Activated naive CD4-positive, alpha-beta T cell treated with anti-CD3 and anti-CD28 coated beads for 36 hours (primary cell): ENCODE measurements at regions of chr15 and their contacts with region 1.

Region 1: DNA sequence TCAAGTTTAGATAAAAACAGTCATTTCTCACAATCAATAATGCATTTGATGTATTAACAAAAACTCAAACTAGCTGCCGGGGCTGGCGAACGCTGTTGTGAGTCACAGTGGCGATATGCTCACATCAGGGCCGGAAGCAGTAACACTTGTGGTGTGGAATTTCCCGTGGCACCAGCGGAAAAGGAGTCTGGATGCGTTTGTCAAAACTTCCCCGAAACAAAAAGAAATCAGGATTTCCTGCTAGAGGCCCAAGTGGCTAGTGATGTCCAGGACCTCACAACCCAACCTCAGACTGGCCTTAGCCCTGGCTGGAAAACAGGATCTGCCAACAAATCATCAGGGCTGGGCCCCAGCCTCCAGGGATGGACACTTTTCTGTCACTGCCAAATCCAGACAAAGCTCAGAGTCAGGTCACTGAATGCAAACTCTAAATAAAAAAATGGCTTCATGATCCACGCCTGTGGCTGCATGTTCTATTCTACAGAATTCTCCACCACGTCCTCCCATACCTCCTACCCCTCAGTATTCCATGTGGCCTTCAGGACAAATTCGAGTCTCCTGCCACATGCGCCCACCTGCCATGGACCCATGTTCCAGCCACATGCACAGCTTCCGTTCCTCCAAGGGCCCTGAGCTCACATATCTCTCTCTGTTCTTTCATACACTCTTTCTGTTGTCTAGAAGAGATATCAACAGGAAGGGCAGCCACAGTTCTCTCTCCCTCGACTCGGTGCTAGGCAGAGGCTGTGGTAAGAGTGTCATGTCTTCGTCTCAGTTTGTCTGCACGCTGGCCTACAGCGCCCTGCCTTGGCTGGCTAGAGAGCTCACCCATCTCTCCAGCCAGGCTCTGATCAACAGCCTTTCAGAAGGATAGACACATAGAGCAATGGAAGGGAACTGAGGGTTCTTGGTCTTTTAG is 35.4 kb downstream of the EHD4 start:
- DNase-seq: peak; percentile 95
- H3K4me3 Mint-ChIP-seq: peak overlapping the region; percentile 68
- H3K27ac Mint-ChIP-seq: peak overlapping the region; percentile 100
- H3K4me1 Mint-ChIP-seq: peaks cover 71% of the 10 kb centered on the region
- H3K27me3 Mint-ChIP-seq: no peaks in the 10 kb centered on the region

Region 2: GRCh38 chr15:41695750-41696426 is 241.0 kb before region 1 on chr15:
- CTCF ChIA-PET with region 1: no interaction called
- intact Hi-C with region 1: loop called (anchors 1 kb)
- DNase-seq: peak; percentile 78
- H3K4me3 Mint-ChIP-seq: peak overlapping the region; percentile 22
- H3K27ac Mint-ChIP-seq: peak overlapping the region; percentile 76
- H3K4me1 Mint-ChIP-seq: peaks cover 48% of the 10 kb centered on the region
- H3K27me3 Mint-ChIP-seq: no peaks in the 10 kb centered on the region

Region 3: GRCh38 chr15:41827880-41828806 is 108.8 kb before region 1 on chr15 and contains the start of gene JMJD7:
- CTCF ChIA-PET with region 1: interaction called, 7 read pairs
- intact Hi-C with region 1: loop called (anchors 1 kb)
- DNase-seq: peak; percentile 97
- H3K4me3 Mint-ChIP-seq: peak within 1 kb of the TSS; percentile 82
- H3K27ac Mint-ChIP-seq: peak within 1 kb of the TSS; percentile 59
- H3K4me1 Mint-ChIP-seq: peaks cover 42% of the 10 kb centered on the region
- H3K27me3 Mint-ChIP-seq: no peaks in the 10 kb centered on the region
- total RNA-seq, gene JMJD7: 18.7 to 19.8 TPM

Region 4: DNA sequence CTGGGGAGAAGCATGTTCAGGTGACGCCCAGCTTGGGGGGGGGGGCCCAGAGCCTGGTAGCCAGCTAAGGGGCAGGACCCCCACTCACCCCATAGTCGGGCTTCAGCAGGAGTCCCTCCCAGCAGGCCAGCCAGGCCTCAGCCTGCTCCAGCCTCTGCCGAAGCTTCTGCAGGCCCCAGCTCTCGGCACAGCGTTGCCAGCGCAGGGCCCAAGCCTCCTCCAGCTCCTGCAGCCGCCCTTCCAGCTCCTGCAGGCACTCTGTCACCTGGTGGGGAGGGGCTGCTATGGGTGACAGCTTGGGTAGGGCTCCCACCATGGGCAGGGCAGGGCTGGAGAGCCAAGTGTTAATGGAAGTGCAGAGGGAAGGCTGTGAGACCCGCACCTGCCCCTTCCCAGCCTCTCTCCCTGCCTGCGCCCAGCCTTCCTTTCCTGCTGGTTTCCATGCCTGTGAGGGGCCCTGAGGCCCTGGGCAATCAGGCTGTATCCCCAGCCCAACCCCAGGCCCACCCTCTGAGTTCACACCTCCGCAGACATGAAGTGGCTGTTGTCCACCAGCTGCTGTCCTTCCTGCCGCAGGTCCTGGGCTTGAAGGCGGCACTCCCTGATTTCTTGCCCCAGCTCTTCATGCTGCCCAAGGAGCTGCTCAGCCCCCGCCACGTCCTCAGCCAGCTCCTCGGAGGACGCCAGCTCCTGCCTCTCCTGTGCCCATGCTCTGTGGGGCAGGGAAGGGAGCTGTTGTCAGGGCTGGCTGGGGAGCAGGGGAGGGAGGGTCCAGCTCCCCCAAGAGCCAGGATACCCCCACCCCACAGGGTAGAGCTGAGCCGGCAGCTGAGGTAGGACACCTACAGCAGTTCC is 83.9 kb before region 1 on chr15:
- CTCF ChIA-PET with region 1: no interaction called
- intact Hi-C with region 1: no loop called
- DNase-seq: no peak
- H3K4me3 Mint-ChIP-seq: no peak overlapping the region
- H3K27ac Mint-ChIP-seq: no peak overlapping the region
- H3K4me1 Mint-ChIP-seq: peaks cover 4% of the 10 kb centered on the region
- H3K27me3 Mint-ChIP-seq: no peaks in the 10 kb centered on the region

Region 5: DNA sequence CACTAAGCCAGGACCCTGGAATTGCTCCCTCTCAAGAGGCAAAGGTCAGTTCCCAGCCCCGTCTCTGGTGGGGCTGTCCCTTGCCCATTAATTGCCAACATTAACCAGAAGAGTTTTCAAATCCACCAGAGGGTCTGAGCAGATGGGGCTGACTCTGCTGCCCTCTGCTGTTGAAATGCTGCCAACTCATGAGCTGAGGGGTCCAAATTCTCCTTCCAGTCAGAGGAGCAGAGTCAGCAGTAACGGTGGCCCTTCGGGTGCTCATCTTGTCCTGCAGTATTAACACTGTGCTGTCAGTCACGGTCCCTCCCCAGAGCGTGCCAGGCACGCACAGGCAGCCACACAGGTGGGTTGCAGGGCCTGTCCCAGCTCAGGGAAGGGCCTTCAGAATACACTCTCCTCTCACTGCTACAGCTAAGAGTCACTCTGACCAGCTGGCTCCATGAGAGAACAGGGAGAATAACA is 32.3 kb before region 1 on chr15:
- CTCF ChIA-PET with region 1: interaction called, 5 read pairs
- intact Hi-C with region 1: loop called (anchors 1 kb)
- DNase-seq: peak; percentile 82
- H3K4me3 Mint-ChIP-seq: no peak overlapping the region
- H3K27ac Mint-ChIP-seq: no peak overlapping the region
- H3K4me1 Mint-ChIP-seq: peaks cover 11% of the 10 kb centered on the region
- H3K27me3 Mint-ChIP-seq: no peaks in the 10 kb centered on the region

Region 6: DNA sequence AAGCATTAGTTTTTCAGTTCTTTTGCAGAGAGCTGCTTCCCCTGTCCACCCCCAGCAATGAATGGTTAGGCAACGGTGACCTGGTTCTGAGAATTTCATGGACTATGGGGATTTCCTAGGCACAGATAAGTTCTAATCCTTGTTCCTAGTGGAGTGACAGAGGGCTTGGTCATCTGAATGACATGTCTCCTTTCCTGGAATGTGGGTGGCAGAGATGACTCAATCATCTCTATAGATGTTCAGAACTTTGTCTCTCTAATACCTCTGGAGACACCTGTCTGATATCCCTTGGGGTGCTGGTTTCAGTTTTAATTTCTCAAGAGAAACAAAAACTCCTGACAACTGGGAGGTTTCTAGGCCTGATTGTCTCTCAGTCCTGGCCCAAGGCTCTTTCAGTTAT is 73.5 kb after region 1 on chr15:
- CTCF ChIA-PET with region 1: no interaction called
- intact Hi-C with region 1: loop called (anchors 1 kb)
- DNase-seq: peak; percentile 61
- H3K4me3 Mint-ChIP-seq: no peak overlapping the region
- H3K27ac Mint-ChIP-seq: peak overlapping the region; percentile 38
- H3K4me1 Mint-ChIP-seq: peaks cover 25% of the 10 kb centered on the region
- H3K27me3 Mint-ChIP-seq: no peaks in the 10 kb centered on the region

Region 7: GRCh38 chr15:42035435-42035761 is 98.5 kb after region 1 on chr15:
- CTCF ChIA-PET with region 1: no interaction called
- intact Hi-C with region 1: loop called (anchors 2 kb)
- DNase-seq: peak; percentile 73
- H3K4me3 Mint-ChIP-seq: peak overlapping the region; percentile 3
- H3K27ac Mint-ChIP-seq: peak overlapping the region; percentile 34
- H3K4me1 Mint-ChIP-seq: peaks cover 19% of the 10 kb centered on the region
- H3K27me3 Mint-ChIP-seq: no peaks in the 10 kb centered on the region

Region 8: DNA sequence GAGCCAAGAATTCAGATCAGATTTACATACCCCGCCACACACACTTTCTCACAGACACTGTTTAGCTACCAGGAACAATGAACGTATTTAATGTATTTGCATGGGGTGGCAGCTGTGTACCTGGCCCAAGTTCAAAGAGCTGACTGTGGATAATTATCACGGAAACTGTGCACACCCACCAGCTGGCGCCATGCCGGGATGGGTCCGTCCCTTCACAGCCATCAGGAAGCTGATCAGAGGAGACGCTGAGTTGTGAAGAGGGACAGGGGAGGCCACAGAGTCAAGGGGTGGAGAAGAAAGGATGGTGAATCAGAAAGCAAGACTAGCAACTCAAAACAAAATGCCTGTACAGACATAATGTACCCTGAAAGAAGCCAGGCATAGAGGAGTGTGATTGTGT is 170.6 kb after region 1 on chr15:
- CTCF ChIA-PET with region 1: no interaction called
- intact Hi-C with region 1: loop called (anchors 1 kb)
- DNase-seq: peak; percentile 89
- H3K4me3 Mint-ChIP-seq: no peak overlapping the region
- H3K27ac Mint-ChIP-seq: peak overlapping the region; percentile 22
- H3K4me1 Mint-ChIP-seq: peaks cover 22% of the 10 kb centered on the region
- H3K27me3 Mint-ChIP-seq: peaks cover 16% of the 10 kb centered on the region